ENCODE measurements at regions of chr11 and their contacts with region 1.

Region 1: GRCh38 chr11:26741036-26741435 is 19.2 kb upstream of the SLC5A12 start:
- DNase-seq: no peak
- H3K4me3 ChIP-seq: no peak overlapping the region
- H3K27ac ChIP-seq: no peak overlapping the region
- H3K4me1 ChIP-seq: no peaks in the 10 kb centered on the region
- H3K27me3 ChIP-seq: no peaks in the 10 kb centered on the region
- CTCF ChIP-seq: no peak
- POLR2A ChIP-seq: no peak

Region 2: DNA sequence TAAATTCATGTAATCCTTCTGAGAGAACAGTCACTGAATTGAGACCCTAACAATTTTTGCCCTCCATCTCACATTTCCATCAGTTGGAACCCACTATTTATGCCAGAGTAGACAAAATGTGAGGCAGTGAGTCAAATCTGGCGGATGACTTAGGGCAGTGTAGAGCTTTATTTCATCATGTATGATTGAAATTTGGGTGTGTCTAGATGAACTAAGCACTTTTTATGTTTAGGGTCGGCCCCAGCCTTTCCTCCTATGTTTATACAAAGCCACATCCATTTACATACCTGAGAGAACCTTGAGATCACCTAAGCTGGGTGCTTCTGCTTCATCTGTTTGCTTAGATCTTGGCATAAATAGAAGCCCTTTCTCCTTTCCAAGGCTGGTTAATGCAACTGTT is 154.0 kb before region 1 on chr11:
- intact Hi-C with region 1: no loop called
- DNase-seq: no peak
- H3K4me3 ChIP-seq: no peak overlapping the region
- H3K27ac ChIP-seq: no peak overlapping the region
- H3K4me1 ChIP-seq: peaks cover 22 to 25% of the 10 kb centered on the region in 2 donors
- H3K27me3 ChIP-seq: no peaks in the 10 kb centered on the region
- CTCF ChIP-seq: no peak
- POLR2A ChIP-seq: no peak

Region 3: GRCh38 chr11:27139742-27140367 is 398.8 kb after region 1 on chr11:
- intact Hi-C with region 1: loop called (anchors 10 kb)
- DNase-seq: no peak
- H3K4me3 ChIP-seq: no peak overlapping the region
- H3K27ac ChIP-seq: no peak overlapping the region
- H3K4me1 ChIP-seq: no peaks in the 10 kb centered on the region
- H3K27me3 ChIP-seq: no peaks in the 10 kb centered on the region
- CTCF ChIP-seq: no peak
- POLR2A ChIP-seq: no peak

Measured in thyroid gland (tissue), 4 donors.